ENCODE measurements at regions of chr6 and their contacts with region 1.

Region 1: GRCh38 chr6:29982097-29982496 is 39.8 kb downstream of the HLA-A start:
- DNase-seq: no peak
- H3K4me3 Mint-ChIP-seq: no peak overlapping the region
- H3K27ac Mint-ChIP-seq: no peak overlapping the region
- H3K4me1 Mint-ChIP-seq: peaks cover 4% of the 10 kb centered on the region
- H3K27me3 Mint-ChIP-seq: no peaks in the 10 kb centered on the region
- CTCF ChIP-seq: no peak

Region 2: GRCh38 chr6:30031381-30031780 is 49.3 kb after region 1 on chr6:
- CTCF ChIA-PET with region 1: interaction called, 11 read pairs
- POLR2A ChIA-PET with region 1: no interaction called
- intact Hi-C with region 1: no loop called
- DNase-seq: no peak
- H3K4me3 Mint-ChIP-seq: no peak overlapping the region
- H3K27ac Mint-ChIP-seq: no peak overlapping the region
- H3K4me1 Mint-ChIP-seq: peaks cover 19% of the 10 kb centered on the region
- H3K27me3 Mint-ChIP-seq: no peaks in the 10 kb centered on the region
- CTCF ChIP-seq: no peak

Region 3: GRCh38 chr6:30326526-30327260 is 344.6 kb after region 1 on chr6 and contains the start of gene TRIM39:
- CTCF ChIA-PET with region 1: no interaction called
- POLR2A ChIA-PET with region 1: no interaction called
- intact Hi-C with region 1: no loop called
- DNase-seq: peak; percentile 81
- H3K4me3 Mint-ChIP-seq: peak within 1 kb of the TSS; percentile 90
- H3K27ac Mint-ChIP-seq: peak within 1 kb of the TSS; percentile 98
- H3K4me1 Mint-ChIP-seq: peaks cover 30% of the 10 kb centered on the region
- H3K27me3 Mint-ChIP-seq: no peaks in the 10 kb centered on the region
- CTCF ChIP-seq: no peak
- total RNA-seq, gene TRIM39: 14.7 and 18.6 TPM in 2 replicates

Measured in MCF 10A (cell line).